ENCODE measurements at regions of chr4 and their contacts with region 1.

Region 1: GRCh38 chr4:78205591-78205990 is 148.5 kb downstream of the FRAS1 start:
- DNase-seq: no peak
- H3K4me3 ChIP-seq: no peak overlapping the region
- H3K27ac ChIP-seq: no peak overlapping the region
- H3K4me1 ChIP-seq: no peaks in the 10 kb centered on the region
- H3K27me3 ChIP-seq: no peaks in the 10 kb centered on the region
- CTCF ChIP-seq: no peak

Region 2: DNA sequence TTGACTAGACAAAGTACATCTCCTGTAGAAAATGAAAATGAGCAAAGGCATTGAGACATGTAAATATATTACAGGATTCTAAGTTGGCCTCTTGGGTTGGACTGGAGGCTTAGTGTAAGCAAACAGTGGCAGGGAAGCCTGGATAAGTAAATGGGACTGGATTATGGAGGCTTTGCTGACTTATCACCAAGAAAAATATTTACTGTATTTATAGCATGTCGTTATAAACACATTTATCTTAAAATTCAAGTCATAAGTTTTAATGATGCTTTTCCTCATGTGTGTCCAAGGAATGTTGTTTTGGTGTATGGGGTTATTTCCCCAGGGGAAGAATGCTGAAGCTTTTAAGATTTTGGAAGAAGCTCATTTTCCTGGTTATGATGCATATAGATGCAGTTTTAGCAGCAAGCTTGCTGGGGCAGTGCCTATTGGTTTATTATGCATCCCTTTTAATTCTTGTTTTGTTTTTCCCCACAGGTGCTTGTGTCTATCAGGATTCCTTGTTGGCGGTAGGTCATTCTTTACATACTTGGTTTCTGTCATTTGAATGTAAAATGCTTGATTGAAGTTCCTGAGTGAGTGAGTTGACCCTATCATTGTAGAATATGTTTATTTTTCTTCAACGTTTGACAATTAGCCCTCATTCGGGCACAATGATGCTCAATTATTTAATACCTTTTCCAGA is 139.9 kb before region 1 on chr4:
- CTCF ChIA-PET with region 1: no interaction called
- dilution Hi-C with region 1: no loop called
- in situ Hi-C with region 1: no loop called
- intact Hi-C with region 1: no loop called
- DNase-seq: no peak
- H3K4me3 ChIP-seq: no peak overlapping the region
- H3K27ac ChIP-seq: no peak overlapping the region
- H3K4me1 ChIP-seq: peaks cover 22% of the 10 kb centered on the region
- H3K27me3 ChIP-seq: no peaks in the 10 kb centered on the region
- CTCF ChIP-seq: no peak

Region 3: GRCh38 chr4:78244705-78245485 is 39.3 kb after region 1 on chr4:
- CTCF ChIA-PET with region 1: no interaction called
- dilution Hi-C with region 1: no loop called
- in situ Hi-C with region 1: no loop called
- intact Hi-C with region 1: loop called (anchors 1 kb)
- DNase-seq: no peak
- H3K4me3 ChIP-seq: no peak overlapping the region
- H3K27ac ChIP-seq: no peak overlapping the region
- H3K4me1 ChIP-seq: peaks cover 14% of the 10 kb centered on the region
- H3K27me3 ChIP-seq: no peaks in the 10 kb centered on the region
- CTCF ChIP-seq: no peak